Activated CD4-positive, alpha-beta memory T cell treated with anti-CD3 and anti-CD28 coated beads for 36 hours (primary cell): ENCODE measurements at regions of chr5 and their contacts with region 1.

Region 1: DNA sequence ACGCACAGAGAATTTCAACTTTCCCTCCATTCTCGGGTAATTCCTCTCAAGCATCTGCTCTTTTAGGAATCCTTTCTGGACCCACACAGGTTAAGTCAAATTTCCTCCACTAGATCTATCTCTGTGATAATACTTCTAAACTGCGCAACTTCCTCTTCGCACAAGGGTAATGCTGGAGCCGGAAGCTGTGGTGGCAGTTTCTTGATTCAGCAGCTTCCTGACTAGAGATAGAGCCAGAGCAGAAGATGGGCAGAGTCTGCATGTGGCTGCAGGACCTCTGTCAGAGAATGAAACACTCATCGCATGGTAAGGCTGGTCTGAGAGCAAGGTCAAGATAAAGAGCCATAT is 11.1 kb upstream of the CDC42SE2 start:
- DNase-seq: peak; percentile 90
- H3K4me3 Mint-ChIP-seq: peak overlapping the region; percentile 87
- H3K27ac Mint-ChIP-seq: peak overlapping the region; percentile 96
- H3K4me1 Mint-ChIP-seq: peaks cover 56% of the 10 kb centered on the region
- H3K27me3 Mint-ChIP-seq: no peaks in the 10 kb centered on the region

Region 2: DNA sequence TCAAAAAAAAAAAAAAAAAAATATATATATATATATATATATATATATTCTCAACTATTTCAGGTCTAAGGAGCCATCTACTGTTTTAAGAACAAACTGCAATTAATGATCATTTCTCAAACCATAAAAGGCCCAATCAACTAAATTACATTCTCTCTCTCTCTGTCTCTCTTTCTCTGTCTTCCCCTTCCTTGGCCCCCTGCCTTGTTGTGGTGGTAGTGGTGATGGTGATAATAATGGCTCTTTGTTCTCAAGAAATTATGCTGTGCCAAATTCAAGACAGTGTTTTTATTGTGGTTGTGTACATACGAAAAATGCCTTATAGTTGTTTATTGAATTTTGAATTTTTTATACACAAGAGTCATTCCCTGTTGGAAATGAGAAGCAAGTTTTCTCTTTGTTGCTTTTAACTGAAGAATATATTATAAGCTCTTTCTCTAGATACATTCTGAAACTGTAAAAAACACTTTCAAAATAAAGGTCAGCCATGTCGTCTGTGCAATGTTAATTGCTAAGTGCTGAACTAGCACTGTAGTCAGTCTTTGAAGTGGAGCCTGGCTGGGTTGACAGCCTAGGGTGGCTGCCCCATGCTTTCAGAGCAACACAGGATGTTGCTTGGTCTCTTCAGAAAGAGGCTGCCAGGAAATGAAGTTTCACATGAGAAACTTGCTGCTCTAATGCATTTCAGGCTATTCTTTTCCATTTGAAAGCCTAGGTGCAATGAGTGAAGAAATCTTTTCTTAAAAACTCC is 183.7 kb before region 1 on chr5:
- CTCF ChIA-PET with region 1: no interaction called
- POLR2A ChIA-PET with region 1: no interaction called
- intact Hi-C with region 1: loop called (anchors 2 kb)
- DNase-seq: peak; percentile 79
- H3K4me3 Mint-ChIP-seq: peak overlapping the region; percentile 1
- H3K27ac Mint-ChIP-seq: peak overlapping the region; percentile 90
- H3K4me1 Mint-ChIP-seq: peaks cover 49% of the 10 kb centered on the region
- H3K27me3 Mint-ChIP-seq: no peaks in the 10 kb centered on the region

Region 3: DNA sequence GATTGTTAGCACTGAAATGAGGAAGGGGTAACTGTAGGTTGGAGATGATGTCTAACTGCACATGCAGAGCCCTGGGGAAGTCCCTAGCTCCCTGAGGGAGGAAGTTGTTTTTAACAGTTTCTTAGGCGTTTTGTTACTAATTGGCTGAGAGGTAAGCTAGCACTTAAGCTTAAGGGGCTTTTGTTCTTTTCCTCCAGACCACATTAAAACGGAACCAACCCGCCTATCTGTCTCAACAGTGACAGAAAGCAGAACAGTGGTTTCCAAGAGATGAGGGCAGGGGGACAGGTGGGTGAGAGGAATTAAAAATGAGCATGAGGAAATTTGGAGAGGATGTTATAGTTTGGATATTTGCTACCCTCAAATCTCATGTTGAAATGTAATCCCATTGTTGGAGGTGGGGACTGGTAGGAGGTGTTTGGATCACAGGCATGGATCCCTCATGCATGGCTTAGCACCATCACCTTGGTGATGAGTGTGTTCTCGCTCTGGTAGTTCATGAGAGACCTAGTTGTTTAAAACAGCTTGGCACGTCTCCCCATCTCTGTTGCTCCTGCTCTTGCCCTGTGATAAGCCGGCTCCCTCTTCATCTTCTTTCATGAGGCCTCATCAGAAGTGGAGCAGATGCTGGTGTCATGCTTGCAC is 43.2 kb before region 1 on chr5:
- CTCF ChIA-PET with region 1: no interaction called
- POLR2A ChIA-PET with region 1: interaction called, 4 read pairs
- intact Hi-C with region 1: loop called (anchors 1 kb)
- DNase-seq: peak; percentile 65
- H3K4me3 Mint-ChIP-seq: peak overlapping the region; percentile 71
- H3K27ac Mint-ChIP-seq: peak overlapping the region; percentile 95
- H3K4me1 Mint-ChIP-seq: peaks cover 49% of the 10 kb centered on the region
- H3K27me3 Mint-ChIP-seq: no peaks in the 10 kb centered on the region

Region 4: DNA sequence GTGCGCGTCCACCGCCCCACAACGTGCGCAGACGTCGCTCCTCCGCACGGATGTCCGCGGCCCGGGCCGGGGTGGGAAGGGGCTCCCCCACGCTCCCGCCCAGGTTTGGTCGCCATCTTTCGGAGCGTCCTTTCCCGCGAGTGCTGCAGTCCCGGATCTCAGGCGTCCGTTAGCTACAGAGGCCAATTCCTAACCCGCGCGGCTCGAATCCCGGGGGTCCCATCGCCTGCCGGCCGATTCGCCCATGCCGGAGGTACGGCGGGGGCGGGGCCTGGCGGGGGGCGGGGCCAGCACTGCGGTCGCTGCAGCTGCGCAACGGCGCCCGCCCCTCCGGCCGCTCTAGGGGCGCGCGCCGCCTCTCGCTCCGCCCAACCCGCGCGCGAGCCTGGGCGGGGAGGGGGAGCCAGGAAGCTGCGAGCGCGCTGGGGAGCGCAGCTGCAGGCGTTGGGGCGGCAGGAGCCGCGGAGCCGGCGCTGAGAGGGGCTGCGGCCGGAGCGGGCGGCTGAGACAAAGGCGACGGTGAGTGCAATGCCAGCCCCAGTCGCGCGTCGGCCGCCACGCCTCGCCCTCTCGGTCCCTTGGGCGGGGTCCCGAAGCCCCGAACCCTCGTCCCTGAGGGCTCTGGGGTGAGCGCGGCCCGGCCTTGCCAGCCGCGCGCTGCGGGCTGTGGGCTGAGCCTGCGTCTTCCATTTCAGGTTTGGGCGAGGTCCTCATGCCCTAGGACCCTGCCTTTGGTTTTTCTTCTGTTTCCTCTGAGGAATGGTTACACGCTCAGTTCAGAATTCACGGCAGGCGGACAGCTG is 11.1 kb after region 1 on chr5 and contains the start of gene CDC42SE2:
- CTCF ChIA-PET with region 1: interaction called, 27 read pairs
- POLR2A ChIA-PET with region 1: interaction called, 73 read pairs
- intact Hi-C with region 1: loop called (anchors 1 kb)
- DNase-seq: peak; percentile 88
- H3K4me3 Mint-ChIP-seq: peak within 1 kb of the TSS; percentile 89
- H3K27ac Mint-ChIP-seq: peak within 1 kb of the TSS; percentile 95
- H3K4me1 Mint-ChIP-seq: peaks cover 48% of the 10 kb centered on the region
- H3K27me3 Mint-ChIP-seq: no peaks in the 10 kb centered on the region
- total RNA-seq, gene CDC42SE2: 103 to 104 TPM

Region 5: GRCh38 chr5:131322926-131323325 is 70.1 kb after region 1 on chr5:
- CTCF ChIA-PET with region 1: no interaction called
- POLR2A ChIA-PET with region 1: interaction called, 5 read pairs
- intact Hi-C with region 1: loop called (anchors 2 kb)
- DNase-seq: no peak
- H3K4me3 Mint-ChIP-seq: peak overlapping the region; percentile 1
- H3K27ac Mint-ChIP-seq: peak overlapping the region; percentile 69
- H3K4me1 Mint-ChIP-seq: peaks cover 67% of the 10 kb centered on the region
- H3K27me3 Mint-ChIP-seq: no peaks in the 10 kb centered on the region

Region 6: GRCh38 chr5:131406086-131406485 is 153.3 kb after region 1 on chr5:
- CTCF ChIA-PET with region 1: no interaction called
- POLR2A ChIA-PET with region 1: no interaction called
- intact Hi-C with region 1: no loop called
- DNase-seq: no peak
- H3K4me3 Mint-ChIP-seq: no peak overlapping the region
- H3K27ac Mint-ChIP-seq: peak overlapping the region; percentile 55
- H3K4me1 Mint-ChIP-seq: peaks cover 11% of the 10 kb centered on the region
- H3K27me3 Mint-ChIP-seq: no peaks in the 10 kb centered on the region

Region 7: DNA sequence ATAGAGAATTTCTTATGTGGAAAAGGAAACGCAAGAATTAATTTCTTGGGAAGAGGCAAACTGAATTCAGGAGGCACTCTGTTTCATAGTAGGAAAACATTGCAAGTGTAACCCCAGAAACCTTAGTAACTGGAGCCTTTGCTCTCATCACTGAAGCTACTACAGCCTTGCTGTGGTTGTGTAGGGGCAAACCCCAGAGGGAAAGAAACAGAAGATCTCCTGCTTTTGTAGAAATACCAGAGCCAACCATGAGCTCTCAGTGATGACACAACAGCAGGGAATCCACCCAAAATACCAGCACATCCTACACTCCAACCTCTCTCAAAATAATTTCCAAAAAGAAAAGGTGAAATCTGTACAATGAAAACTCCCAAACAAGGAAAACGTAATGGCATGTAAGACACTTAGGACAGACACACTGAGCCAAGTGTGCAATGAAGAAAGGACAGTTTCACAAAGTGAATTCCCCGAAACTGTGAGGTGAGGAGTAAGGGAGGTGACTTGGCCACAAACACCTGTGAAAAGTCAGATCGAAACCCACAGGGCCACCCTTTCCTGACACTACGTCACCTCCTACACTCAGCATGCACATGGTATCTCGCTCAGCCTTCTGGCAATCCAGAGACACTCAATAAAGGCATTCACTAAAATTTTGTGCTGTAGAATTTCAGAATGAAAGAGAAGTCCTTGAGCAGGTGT is 767.2 kb after region 1 on chr5:
- CTCF ChIA-PET with region 1: no interaction called
- POLR2A ChIA-PET with region 1: no interaction called
- intact Hi-C with region 1: loop called (anchors 10 kb)
- DNase-seq: peak; percentile 91
- H3K4me3 Mint-ChIP-seq: peak overlapping the region; percentile 11
- H3K27ac Mint-ChIP-seq: peak overlapping the region; percentile 90
- H3K4me1 Mint-ChIP-seq: peaks cover 52% of the 10 kb centered on the region
- H3K27me3 Mint-ChIP-seq: peaks cover 22% of the 10 kb centered on the region